ENCODE measurements at regions of chr9 and their contacts with region 1.

Region 1: GRCh38 chr9:93302551-93303257 is 118.8 kb downstream of the WNK2 start:
- DNase-seq: peak; percentile 73
- ATAC-seq: peak; percentile 43
- H3K4me3 ChIP-seq: no peak overlapping the region
- H3K27ac ChIP-seq: peak overlapping the region; percentile 95
- H3K4me1 ChIP-seq: peaks cover 65% of the 10 kb centered on the region
- H3K27me3 ChIP-seq: no peaks in the 10 kb centered on the region
- CTCF ChIP-seq: peak; percentile 81
- EP300 ChIP-seq: no peak
- POLR2A ChIP-seq: no peak
- RAD21 ChIP-seq: peak; percentile 79; the same call in 1 of the 2 replicates

Region 2: GRCh38 chr9:93108291-93109041 is 194.2 kb before region 1 on chr9:
- CTCF ChIA-PET with region 1: interaction called, 6 read pairs
- POLR2A ChIA-PET with region 1: no interaction called
- in situ Hi-C with region 1: no loop called
- intact Hi-C with region 1: loop called (anchors 1 kb)
- DNase-seq: no peak
- ATAC-seq: no peak
- H3K4me3 ChIP-seq: no peak overlapping the region
- H3K27ac ChIP-seq: no peak overlapping the region
- H3K4me1 ChIP-seq: peaks cover 44% of the 10 kb centered on the region
- H3K27me3 ChIP-seq: no peaks in the 10 kb centered on the region
- CTCF ChIP-seq: no peak
- EP300 ChIP-seq: no peak
- POLR2A ChIP-seq: no peak
- RAD21 ChIP-seq: no peak

Region 3: DNA sequence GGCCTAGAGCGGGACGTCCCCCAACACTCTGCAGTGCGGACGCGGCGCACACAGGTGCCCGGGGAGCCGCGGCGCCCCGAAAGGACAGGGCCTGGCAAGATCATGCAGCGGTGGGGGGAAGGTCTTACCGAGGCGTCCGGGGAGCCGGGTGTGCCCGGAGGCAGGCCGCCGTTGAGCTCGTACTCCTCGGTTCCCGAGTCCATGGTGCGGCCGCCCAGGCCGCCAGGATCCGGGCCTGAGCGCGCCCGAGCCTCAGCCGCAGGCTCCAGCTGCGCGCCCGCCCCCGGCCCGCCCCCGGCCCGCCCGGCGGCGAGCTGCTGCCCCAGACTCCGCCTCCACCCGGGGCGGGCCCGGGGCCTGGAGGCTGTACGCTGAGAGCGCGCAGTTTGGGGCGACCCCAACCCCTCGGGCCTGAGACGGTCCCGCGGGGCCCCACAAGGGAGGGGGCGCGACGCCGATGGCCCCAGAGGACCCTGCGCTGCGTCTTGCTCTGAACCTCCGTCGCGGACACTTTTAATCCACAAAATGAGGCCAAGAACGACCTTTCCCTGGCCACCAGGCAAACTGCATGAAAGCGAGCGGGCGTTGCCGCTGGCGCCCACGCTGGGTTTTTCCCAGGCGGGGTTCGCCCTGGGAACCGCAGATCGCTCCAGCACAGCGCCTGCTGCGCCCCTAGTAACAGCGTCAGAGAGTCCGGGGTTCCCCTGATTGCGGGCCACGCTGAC is 168.5 kb before region 1 on chr9 and contains the start of gene NINJ1:
- CTCF ChIA-PET with region 1: no interaction called
- POLR2A ChIA-PET with region 1: interaction called, 30 read pairs
- in situ Hi-C with region 1: no loop called
- intact Hi-C with region 1: no loop called
- DNase-seq: peak; percentile 40
- ATAC-seq: peak; percentile 81
- H3K4me3 ChIP-seq: peak within 1 kb of the TSS; percentile 85 to 96 (median 92)
- H3K27ac ChIP-seq: peak within 1 kb of the TSS; percentile 99
- H3K4me1 ChIP-seq: peaks cover 77% of the 10 kb centered on the region
- H3K27me3 ChIP-seq: peaks cover 1 to 6% of the 10 kb centered on the region in 2 experiments; a peak in 1 of 5 replicates
- CTCF ChIP-seq: peak; percentile 5; the same call in 1 of the 2 replicates
- EP300 ChIP-seq: no peak
- POLR2A ChIP-seq: peak in 1 of 2 experiments; percentile 95; a peak in 2 of 4 replicates
- RAD21 ChIP-seq: peak; percentile 42; the same call in 1 of the 2 replicates
- total RNA-seq, gene NINJ1: 77.1 and 92.1 TPM in 2 replicates

Region 4: GRCh38 chr9:93245122-93245970 is 57.4 kb before region 1 on chr9:
- CTCF ChIA-PET with region 1: no interaction called
- POLR2A ChIA-PET with region 1: interaction called, 10 read pairs
- in situ Hi-C with region 1: loop called (anchors 10 kb)
- intact Hi-C with region 1: loop called (anchors 10 kb)
- DNase-seq: peak; percentile 15
- ATAC-seq: no peak
- H3K4me3 ChIP-seq: no peak overlapping the region
- H3K27ac ChIP-seq: no peak overlapping the region
- H3K4me1 ChIP-seq: peaks cover 35% of the 10 kb centered on the region
- H3K27me3 ChIP-seq: no peaks in the 10 kb centered on the region
- CTCF ChIP-seq: no peak
- EP300 ChIP-seq: no peak
- POLR2A ChIP-seq: no peak
- RAD21 ChIP-seq: no peak

Region 5: DNA sequence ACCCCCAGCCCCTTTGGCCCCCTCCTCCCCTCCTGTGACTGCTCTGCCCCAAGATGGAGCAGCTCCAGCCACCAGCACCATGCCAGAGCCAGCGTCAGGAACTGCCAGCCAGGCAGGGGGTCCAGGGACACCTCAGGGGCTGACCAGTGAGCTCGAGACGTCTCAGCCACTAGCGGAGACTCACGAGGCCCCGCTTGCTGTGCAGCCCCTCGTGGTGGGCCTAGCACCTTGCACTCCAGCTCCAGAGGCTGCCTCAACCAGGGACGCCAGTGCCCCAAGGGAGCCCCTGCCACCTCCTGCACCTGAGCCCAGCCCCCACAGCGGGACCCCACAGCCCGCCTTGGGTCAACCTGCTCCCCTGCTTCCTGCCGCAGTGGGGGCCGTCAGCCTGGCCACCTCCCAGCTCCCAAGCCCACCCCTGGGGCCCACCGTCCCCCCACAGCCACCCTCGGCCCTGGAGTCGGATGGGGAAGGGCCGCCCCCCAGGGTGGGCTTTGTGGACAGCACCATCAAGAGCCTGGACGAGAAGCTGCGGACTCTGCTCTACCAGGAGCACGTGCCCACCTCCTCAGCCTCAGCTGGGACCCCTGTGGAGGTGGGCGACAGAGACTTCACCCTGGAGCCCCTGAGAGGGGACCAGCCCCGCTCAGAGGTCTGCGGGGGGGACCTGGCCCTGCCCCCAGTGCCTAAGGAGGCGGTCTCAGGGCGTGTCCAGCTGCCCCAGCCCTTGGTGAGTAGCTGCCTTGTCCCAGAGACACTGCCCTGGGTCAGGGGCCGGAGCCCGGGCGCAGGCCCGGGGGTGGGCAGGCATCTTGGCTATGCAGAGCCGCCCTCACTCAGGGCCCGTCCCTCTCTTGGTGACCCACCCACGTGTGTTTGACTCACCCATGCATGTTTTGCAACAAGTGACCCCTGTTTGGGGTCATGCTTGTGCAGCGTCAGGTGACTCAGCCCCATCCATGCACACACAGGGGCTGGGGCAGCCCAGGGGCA is 13.5 kb before region 1 on chr9:
- CTCF ChIA-PET with region 1: no interaction called
- POLR2A ChIA-PET with region 1: interaction called, 67 read pairs
- in situ Hi-C with region 1: no loop called
- intact Hi-C with region 1: no loop called
- DNase-seq: peak; percentile 79
- ATAC-seq: peak; percentile 84
- H3K4me3 ChIP-seq: no peak overlapping the region
- H3K27ac ChIP-seq: no peak overlapping the region
- H3K4me1 ChIP-seq: peaks cover 31% of the 10 kb centered on the region
- H3K27me3 ChIP-seq: no peaks in the 10 kb centered on the region
- CTCF ChIP-seq: no peak
- EP300 ChIP-seq: peak in 1 of 2 experiments; percentile 63; a peak in 2 of 4 replicates
- POLR2A ChIP-seq: no peak
- RAD21 ChIP-seq: no peak

Measured in HepG2 (cell line).